ENCODE measurements at regions of chr22 and their contacts with region 1.

Region 1: GRCh38 chr22:43213051-43213450 is 26.1 kb upstream of the TTLL12 start:
- DNase-seq: no peak
- H3K4me3 ChIP-seq: no peak overlapping the region
- H3K27ac ChIP-seq: no peak overlapping the region
- H3K27me3 ChIP-seq: peaks cover 18% of the 10 kb centered on the region
- CTCF ChIP-seq: no peak

Region 2: DNA sequence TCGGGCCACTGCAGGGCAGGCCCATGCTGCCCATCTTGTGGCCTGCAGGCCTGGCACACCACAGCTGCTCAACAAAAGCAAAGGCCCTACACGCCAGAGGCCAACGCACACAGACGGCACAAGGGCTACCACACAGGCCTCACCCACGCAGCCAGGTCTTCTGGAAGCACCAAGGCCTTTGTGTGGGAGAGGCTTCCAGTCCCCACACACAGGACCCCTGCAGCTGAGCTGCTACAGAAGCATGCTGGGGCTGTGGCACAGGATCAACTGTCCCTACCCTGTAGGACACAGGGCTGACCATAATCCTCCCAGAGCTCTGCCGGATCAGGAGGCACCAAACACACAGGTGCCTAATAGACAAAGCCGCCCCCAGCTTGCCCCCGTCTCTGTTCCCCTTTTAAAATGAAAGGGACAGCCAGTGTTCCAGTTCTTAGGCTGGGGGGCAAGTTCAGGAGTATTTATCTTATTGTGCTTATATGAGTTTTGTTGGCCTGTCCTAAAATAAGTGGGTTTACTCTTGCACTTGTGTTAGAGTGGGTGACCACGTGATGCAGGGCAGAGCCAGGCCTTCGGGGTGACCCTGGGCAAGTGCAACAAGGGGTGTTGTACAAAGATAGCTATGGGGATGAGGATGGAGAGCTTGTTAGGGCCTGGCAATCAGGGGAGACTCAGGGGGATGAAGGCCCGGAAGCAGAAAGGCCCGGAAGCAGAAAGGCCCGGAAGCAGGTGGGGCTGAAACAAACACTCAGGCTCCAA is 31.6 kb before region 1 on chr22:
- CTCF ChIA-PET with region 1: no interaction called
- POLR2A ChIA-PET with region 1: no interaction called
- DNase-seq: no peak
- H3K4me3 ChIP-seq: no peak overlapping the region
- H3K27ac ChIP-seq: no peak overlapping the region
- H3K27me3 ChIP-seq: no peaks in the 10 kb centered on the region
- CTCF ChIP-seq: no peak

Region 3: DNA sequence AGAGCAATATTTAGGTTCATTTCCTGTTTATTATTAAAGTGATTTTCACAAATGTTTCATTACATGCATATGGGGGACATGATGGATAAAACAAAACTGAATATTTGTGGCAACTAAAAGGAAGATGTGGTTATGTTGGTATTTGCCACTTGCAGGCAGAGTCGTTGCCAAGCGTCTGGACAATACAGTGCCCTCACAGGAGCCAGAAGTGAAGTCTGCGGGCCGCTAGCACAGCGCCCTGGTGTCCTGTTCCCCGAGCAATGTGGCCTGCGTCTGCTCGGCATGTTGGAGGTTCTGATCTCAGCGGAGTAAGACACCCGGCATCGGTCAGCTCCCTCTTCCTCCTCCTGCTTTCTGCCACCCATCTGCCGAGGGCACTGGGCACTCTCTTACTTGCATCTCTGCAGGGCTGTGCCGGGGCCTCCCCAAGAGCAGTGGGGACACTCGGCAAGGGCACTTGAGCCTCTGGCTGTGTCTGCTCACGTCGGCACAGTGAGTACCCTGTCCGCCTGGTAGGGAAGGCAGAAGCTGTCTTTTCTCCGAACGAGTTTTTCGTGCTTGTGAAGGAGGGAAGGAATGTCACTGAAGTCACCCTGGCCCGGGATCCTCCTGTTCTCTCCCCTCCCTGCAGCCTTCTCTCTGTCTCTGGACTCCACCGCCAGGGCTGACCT is 15.6 kb before region 1 on chr22:
- CTCF ChIA-PET with region 1: no interaction called
- POLR2A ChIA-PET with region 1: interaction called, 11 read pairs
- DNase-seq: no peak
- H3K4me3 ChIP-seq: no peak overlapping the region
- H3K27ac ChIP-seq: no peak overlapping the region
- H3K27me3 ChIP-seq: peaks cover 6% of the 10 kb centered on the region
- CTCF ChIP-seq: no peak

Region 4: DNA sequence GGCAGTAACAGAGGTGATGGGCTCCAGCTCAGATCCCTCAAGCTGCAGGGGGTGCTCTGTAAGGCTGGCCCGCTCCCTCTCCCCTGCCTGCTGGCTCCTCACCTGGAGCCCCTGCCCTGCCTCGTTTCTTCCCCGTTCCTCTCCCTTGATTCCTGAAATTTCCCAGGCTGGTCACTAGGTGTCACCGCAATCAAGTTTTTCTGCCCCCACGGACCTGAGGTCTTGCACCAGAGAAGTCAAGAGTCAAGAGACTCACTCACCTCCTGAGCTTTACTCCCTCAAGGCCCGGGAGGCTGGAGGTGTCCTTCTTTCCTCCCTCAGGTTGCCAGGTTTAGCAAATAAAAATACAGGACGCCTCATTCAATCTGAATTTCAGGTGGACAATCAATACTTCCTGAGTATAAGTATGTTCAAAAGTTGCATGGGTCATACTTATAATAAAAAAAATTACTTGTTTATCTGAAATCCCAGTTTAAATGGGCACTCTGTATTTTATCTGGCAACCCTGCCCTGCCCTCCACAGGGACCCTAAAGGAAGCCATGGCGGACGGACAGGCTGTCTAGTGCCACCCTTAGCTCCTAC is 60.9 kb after region 1 on chr22:
- CTCF ChIA-PET with region 1: no interaction called
- POLR2A ChIA-PET with region 1: no interaction called
- DNase-seq: no peak
- H3K4me3 ChIP-seq: no peak overlapping the region
- H3K27ac ChIP-seq: no peak overlapping the region
- H3K27me3 ChIP-seq: peaks cover 20% of the 10 kb centered on the region
- CTCF ChIP-seq: peak; percentile 68

Region 5: GRCh38 chr22:43313244-43313889 is 100.3 kb after region 1 on chr22:
- CTCF ChIA-PET with region 1: no interaction called
- POLR2A ChIA-PET with region 1: no interaction called
- DNase-seq: no peak
- H3K4me3 ChIP-seq: no peak overlapping the region
- H3K27ac ChIP-seq: no peak overlapping the region
- H3K27me3 ChIP-seq: peaks cover 28% of the 10 kb centered on the region
- CTCF ChIP-seq: no peak

Region 6: GRCh38 chr22:43337385-43337784 is 124.3 kb after region 1 on chr22:
- CTCF ChIA-PET with region 1: no interaction called
- POLR2A ChIA-PET with region 1: no interaction called
- DNase-seq: no peak
- H3K4me3 ChIP-seq: no peak overlapping the region
- H3K27ac ChIP-seq: no peak overlapping the region
- H3K27me3 ChIP-seq: peaks cover 28% of the 10 kb centered on the region
- CTCF ChIP-seq: no peak